ENCODE measurements at regions of chr6 and their contacts with region 1.

Region 1: GRCh38 chr6:144131248-144131709 is 19.0 kb upstream of the STX11 start:
- DNase-seq: no peak
- ATAC-seq: peak; percentile 94
- H3K4me3 Mint-ChIP-seq: peak overlapping the region; percentile 47
- H3K27ac Mint-ChIP-seq: peak overlapping the region; percentile 91
- H3K4me1 Mint-ChIP-seq: peaks cover 38% of the 10 kb centered on the region
- H3K27me3 Mint-ChIP-seq: peaks cover 2% of the 10 kb centered on the region

Region 2: GRCh38 chr6:144063744-144064401 is 67.4 kb before region 1 on chr6:
- CTCF ChIA-PET with region 1: no interaction called
- POLR2A ChIA-PET with region 1: no interaction called
- intact Hi-C with region 1: loop called in 1 of 2 experiments (anchors 2 kb)
- DNase-seq: peak; percentile 93
- ATAC-seq: peak; percentile 90
- H3K4me3 Mint-ChIP-seq: peak overlapping the region; percentile 81
- H3K27ac Mint-ChIP-seq: peak overlapping the region; percentile 80
- H3K4me1 Mint-ChIP-seq: peaks cover 46% of the 10 kb centered on the region
- H3K27me3 Mint-ChIP-seq: peaks cover 11% of the 10 kb centered on the region

Region 3: DNA sequence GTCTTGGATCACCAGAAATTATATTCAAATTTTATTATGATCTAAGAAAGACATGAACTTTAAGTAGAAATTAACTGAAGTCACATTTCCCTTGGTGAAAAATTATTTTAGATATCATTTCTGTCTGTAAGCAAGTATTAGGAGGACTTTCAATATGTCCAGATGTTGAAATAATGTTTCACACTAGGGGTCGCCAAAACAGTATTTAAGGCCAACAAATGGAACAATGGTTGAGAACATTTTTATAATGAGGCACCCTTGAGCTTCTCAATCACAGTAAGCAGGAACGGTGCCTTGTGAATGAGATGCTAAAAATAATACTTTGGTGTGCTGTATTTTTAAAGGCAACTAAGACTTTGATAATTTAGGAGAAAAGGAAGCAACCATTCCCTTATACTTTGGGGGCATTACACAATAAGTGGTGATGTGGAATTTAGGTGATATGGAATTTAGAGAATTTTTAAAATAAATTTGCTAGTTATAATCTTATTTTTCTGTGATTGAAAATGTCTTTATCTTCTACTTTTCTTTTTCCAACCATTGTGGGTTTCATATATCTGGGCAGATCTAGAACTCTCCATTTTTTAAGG is 26.3 kb before region 1 on chr6:
- CTCF ChIA-PET with region 1: interaction called, 14 read pairs
- POLR2A ChIA-PET with region 1: no interaction called
- intact Hi-C with region 1: no loop called
- DNase-seq: peak; percentile 30
- ATAC-seq: peak; percentile 78
- H3K4me3 Mint-ChIP-seq: no peak overlapping the region
- H3K27ac Mint-ChIP-seq: no peak overlapping the region
- H3K4me1 Mint-ChIP-seq: peaks cover 8% of the 10 kb centered on the region
- H3K27me3 Mint-ChIP-seq: no peaks in the 10 kb centered on the region

Region 4: GRCh38 chr6:144178323-144178722 is 47.0 kb after region 1 on chr6:
- CTCF ChIA-PET with region 1: no interaction called
- POLR2A ChIA-PET with region 1: interaction called, 4 read pairs
- intact Hi-C with region 1: loop called (anchors 1 kb)
- DNase-seq: peak; percentile 13
- ATAC-seq: peak; percentile 83
- H3K4me3 Mint-ChIP-seq: no peak overlapping the region
- H3K27ac Mint-ChIP-seq: peak overlapping the region; percentile 29
- H3K4me1 Mint-ChIP-seq: peaks cover 49% of the 10 kb centered on the region
- H3K27me3 Mint-ChIP-seq: no peaks in the 10 kb centered on the region

Region 5: DNA sequence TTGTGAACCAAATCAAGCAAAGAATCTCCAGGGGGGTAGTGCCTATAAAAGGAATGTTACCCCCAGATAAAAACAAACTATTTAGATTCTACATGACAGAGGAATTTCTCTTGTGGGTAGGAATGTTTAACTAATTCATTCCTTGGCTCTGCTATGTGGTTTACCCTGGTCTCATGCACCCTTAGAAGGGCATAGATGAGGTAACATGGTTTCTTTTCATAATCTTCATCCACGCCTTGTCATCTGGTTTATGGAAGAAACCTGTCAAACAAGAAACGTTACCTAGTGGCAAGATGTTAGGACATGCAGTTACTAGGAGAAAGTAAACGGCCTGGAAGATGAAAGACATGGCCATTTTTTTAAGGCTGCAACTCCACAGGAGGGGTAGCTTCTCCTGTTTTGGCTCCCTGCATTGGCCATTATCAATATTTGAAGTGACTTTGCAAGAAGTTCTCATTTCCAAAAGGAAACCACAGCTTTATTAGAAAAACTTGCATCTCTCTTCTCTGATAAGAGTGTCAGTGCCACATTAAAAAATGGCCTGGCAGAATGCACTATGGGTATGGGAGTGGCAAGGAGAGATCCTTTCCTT is 64.5 kb after region 1 on chr6:
- CTCF ChIA-PET with region 1: no interaction called
- POLR2A ChIA-PET with region 1: no interaction called
- intact Hi-C with region 1: no loop called
- DNase-seq: no peak
- ATAC-seq: no peak
- H3K4me3 Mint-ChIP-seq: no peak overlapping the region
- H3K27ac Mint-ChIP-seq: no peak overlapping the region
- H3K4me1 Mint-ChIP-seq: peaks cover 4% of the 10 kb centered on the region
- H3K27me3 Mint-ChIP-seq: no peaks in the 10 kb centered on the region

Region 6: GRCh38 chr6:144231721-144232120 is 100.4 kb after region 1 on chr6:
- CTCF ChIA-PET with region 1: no interaction called
- POLR2A ChIA-PET with region 1: no interaction called
- intact Hi-C with region 1: no loop called
- DNase-seq: no peak
- ATAC-seq: no peak
- H3K4me3 Mint-ChIP-seq: no peak overlapping the region
- H3K27ac Mint-ChIP-seq: no peak overlapping the region
- H3K4me1 Mint-ChIP-seq: no peaks in the 10 kb centered on the region
- H3K27me3 Mint-ChIP-seq: no peaks in the 10 kb centered on the region

Region 7: DNA sequence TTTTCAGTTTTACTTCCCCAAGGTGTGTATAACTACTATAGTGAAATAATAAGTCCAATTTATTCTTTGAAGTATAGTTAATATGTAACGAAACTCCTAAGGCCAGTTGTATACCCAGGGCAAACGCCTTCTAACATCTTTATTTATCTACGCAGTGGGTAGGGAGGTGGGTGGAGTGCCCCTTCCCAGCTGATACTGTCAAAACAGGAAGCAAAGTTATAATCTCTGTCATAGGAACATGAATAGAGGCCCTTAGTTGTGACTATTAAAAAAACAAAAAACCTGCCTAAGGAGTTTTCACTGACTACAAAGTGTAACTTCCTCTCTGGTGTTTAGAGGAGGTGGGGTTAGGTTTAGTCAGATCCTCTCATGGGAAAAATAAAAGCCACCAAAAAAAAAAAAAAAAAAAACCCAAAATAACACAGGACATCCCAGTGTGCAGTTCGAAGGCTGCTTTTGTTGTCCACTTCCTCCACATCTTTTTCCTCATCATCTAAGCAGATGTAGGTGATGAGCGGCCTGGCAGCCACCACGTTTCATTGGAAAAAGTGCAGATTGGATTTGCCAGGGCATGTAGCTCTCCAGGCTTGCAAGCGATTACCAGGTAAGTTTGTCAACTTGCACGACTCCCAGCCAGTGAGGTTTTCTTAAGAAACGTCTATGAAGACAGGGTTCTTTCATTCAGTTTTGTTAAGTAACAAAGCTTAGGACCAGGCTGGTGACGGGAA is 212.6 kb after region 1 on chr6:
- CTCF ChIA-PET with region 1: no interaction called
- POLR2A ChIA-PET with region 1: no interaction called
- intact Hi-C with region 1: loop called in 1 of 2 experiments (anchors 2 kb)
- DNase-seq: peak; percentile 60
- ATAC-seq: peak; percentile 54
- H3K4me3 Mint-ChIP-seq: peak overlapping the region; percentile 82
- H3K27ac Mint-ChIP-seq: peak overlapping the region; percentile 98
- H3K4me1 Mint-ChIP-seq: peaks cover 72% of the 10 kb centered on the region
- H3K27me3 Mint-ChIP-seq: no peaks in the 10 kb centered on the region

Region 8: DNA sequence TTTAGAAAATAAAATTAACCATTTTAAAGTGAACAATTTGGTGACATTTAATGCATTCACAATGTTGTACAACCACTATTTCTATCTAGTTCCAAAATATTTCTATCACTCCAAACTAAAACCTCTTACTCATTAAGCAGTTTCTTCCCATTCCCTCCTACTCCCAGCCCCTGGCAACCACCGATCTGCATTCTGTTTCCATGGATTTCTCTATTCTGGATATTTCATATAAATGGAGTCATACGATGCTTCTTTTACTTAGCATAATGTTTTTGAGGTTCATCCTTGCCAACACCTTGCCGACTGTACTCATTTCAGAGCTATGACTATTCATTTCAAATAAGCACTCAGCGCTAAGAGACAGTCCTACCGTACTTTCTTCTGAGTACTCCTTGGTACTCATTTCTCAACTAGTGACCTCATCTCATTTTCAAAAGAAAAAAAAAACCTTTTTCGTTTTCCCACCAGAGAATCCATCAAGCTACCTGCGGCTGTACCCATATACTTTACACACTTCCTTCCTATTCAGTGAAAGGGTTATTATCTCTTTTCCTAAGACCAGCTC is 413.1 kb after region 1 on chr6:
- CTCF ChIA-PET with region 1: no interaction called
- POLR2A ChIA-PET with region 1: no interaction called
- intact Hi-C with region 1: loop called in 1 of 2 experiments (anchors 1 kb)
- DNase-seq: peak; percentile 31
- ATAC-seq: peak; percentile 99
- H3K4me3 Mint-ChIP-seq: no peak overlapping the region
- H3K27ac Mint-ChIP-seq: peak overlapping the region; percentile 2
- H3K4me1 Mint-ChIP-seq: peaks cover 20% of the 10 kb centered on the region
- H3K27me3 Mint-ChIP-seq: no peaks in the 10 kb centered on the region